Sciatic nerve (tissue), 2 donors: ENCODE measurements at regions of chrX and their contacts with region 1.

Region 1: DNA sequence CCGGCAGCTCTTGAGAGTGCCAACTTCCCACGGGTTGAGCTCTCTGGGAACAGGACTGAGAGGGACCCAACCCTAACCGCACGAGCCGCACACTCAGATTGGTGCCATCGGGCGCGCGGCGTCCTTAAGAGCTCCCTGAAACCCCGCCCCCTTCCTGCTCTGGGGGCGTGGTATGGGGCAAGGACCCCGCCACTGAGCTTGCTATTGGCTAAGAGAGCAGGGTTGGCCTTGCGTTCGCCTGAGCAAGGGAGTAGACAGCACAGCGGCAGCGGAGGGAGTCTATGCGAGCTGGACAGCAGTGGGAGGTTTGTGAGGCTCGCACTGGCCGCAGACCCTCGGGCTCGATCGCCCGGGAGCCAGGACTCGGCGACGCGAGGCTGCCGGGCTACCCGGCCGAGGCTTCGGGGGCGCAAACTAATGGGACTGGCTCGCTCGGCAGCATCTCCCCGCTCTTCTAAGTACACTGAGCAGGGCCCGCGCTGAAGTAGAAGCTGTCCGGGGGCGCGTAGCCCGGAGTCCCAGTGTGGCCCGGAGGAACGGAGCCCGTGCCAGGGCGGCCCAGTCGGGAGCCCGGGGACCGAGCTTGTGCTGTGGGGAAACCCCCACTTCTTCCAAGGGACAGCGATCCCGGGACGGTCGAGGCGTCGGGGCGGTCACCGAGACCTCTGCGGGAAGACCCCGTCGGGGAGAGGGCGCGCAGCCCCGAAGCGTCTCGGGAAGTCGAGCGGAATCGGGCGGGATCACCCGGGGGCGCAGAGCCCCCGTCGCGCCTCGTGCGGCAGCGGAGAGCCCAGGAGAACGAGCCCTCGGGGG is at the start of gene EFNB1:
- DNase-seq: peak; percentile 94
- ATAC-seq: peak; percentile 93
- total RNA-seq, gene EFNB1: 69.5 TPM

Region 2: DNA sequence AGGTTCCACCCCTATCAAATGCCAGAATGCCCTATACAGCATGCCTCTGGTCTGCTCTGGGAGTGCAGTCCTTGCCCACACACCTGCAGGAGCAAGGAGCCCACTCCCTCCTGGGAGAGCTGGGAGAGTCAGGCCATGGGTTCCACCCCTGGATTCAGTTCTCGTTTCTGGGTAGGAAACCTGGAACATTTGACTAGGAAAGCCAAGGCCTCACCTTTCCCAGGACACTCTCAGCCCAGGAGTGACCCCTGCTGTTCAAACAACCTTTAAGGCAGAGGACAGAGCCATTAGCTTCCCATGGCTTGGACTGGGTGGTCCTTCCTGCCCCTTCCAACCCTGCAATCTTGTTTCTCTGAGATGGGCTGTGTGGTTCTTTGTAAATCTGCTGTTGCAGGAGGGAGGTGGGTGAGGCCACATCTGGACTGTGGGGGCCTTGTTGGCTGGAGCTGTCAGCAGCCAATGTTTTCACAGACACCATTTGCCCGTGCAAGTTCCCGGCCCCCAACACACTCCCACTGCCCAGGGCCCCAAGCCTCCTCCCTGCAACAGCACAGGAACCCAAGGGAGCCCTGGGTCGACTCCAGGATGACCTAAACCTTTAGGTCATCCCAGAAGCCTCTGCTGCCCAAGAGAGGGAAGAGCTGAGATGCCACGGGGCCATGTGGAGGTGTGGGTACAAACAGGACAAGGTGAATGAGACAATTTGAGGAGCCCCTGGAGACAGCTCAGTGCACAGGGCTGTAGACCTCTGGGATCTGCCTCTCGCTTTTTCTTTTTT is 231.9 kb after region 1 on chrX:
- intact Hi-C with region 1: loop called (anchors 10 kb)
- DNase-seq: peak; percentile 71
- ATAC-seq: peak; percentile 92

Region 3: DNA sequence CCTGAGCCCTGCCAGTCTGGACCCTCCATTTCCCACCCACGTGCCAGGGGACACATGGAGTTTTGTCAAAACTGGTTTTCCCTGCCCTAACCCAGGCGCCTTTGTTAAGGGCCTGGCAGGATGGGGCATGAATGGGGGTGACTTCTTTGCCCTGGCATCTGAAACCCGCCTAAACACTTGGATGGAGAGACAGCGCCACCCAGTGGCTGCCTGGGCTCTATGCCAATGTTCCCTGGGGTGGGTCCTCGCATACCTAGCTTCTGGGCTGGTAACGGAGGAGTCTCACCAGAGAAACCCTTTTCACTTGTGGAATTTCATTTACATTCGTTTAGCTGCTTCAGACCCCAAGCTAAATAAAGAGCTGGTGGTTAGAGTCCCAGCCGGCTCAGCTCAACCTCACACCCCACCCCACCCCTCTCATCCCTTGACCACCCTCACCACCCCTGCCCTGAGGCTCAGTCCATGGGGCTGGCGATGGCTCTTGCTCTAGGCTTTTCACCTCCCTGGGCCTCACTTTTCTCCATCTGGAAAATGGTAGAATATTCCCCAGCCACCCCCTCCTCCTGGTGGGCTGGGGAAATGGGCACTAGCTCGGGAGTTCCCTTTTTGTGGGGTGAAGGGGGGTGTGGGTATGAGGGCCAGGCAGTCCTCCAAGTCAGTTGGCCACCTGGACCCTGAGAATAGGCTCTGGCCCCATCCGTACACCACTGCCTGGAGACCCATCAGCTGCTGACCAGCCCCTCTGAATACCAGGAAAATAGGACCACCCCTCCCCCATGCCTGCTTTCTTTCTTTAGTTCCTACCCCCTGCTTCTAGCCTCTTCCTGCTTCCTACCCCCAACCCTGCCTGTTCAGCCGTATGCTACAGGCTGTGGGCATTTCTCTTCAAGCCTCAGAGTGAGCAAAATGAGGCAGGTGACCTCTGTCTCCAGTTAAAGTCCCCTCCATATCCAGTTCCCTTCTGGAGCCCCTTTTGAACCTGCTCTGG is 393.5 kb after region 1 on chrX:
- intact Hi-C with region 1: loop called (anchors 5 kb)
- DNase-seq: peak; percentile 86
- ATAC-seq: peak; percentile 93

Region 4: GRCh38 chrX:69285881-69286564 is 457.1 kb after region 1 on chrX:
- intact Hi-C with region 1: loop called (anchors 5 kb)
- DNase-seq: peak; percentile 86
- ATAC-seq: peak; percentile 85

Region 5: DNA sequence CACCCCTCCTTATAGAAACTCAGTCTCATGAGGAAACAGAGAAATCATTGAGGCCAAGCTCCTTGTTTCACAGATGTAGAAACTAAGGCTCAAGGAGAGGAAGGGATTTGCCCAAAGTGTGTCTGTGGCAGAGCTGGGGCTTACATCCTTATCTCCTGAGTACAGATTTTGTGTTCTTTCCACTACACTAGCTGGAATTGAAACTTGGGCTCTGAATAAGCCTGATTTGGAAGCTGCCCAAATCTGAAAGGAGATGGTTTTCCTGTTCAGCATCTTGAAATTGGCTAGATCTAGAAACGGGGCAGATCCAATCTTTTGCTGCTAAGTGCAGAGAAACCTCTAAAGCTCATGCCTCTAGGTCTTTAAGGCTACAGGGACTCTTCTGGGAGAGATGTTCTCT is 1196.5 kb after region 1 on chrX:
- intact Hi-C with region 1: no loop called
- DNase-seq: no peak
- ATAC-seq: no peak